GM12878 (cell line): ENCODE measurements at regions of chr10 and their contacts with region 1.

Region 1: GRCh38 chr10:15106352-15107013 is 9.3 kb downstream of the RPP38 start:
- DNase-seq: peak; percentile 26
- ATAC-seq: peak; percentile 99
- H3K4me3 ChIP-seq: no peak overlapping the region
- H3K27ac ChIP-seq: no peak overlapping the region
- H3K4me1 ChIP-seq: no peaks in the 10 kb centered on the region
- H3K27me3 ChIP-seq: no peaks in the 10 kb centered on the region
- CTCF ChIP-seq: peak; percentile 90 to 95 (median 93)
- EP300 ChIP-seq: no peak
- POLR2A ChIP-seq: no peak
- RAD21 ChIP-seq: peak; percentile 91

Region 2: DNA sequence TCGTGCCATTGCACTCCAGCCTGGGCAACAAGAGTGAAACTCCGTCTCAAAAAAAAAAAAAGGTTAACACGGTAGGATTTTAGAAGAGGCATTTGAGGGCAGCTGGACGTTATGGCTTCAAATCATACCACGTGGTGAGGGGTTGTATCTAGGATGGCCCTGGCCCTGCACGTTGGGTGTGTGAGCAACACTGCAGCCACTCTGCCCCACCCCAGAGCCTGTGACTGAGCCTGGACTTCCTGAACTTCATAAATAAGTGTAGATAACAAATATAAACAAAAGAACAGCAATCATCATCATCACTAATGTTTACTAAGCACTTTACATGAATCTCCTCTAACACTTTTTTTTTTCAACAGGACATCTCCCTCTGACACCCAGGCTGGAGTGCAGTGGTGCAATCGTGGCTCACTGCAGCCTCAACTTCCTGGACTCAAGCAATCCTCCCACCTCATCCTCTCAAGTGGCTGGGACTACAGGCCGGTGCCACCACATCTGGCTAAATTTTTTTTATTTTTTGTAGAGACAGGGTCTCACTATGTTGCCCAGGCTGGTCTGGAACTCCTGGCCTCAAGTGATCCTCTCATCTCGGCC is 606.2 kb before region 1 on chr10:
- CTCF ChIA-PET with region 1: no interaction called
- POLR2A ChIA-PET with region 1: no interaction called
- RAD21 ChIA-PET with region 1: no interaction called
- SMC1A ChIA-PET with region 1: no interaction called
- in situ Hi-C with region 1: no loop called
- intact Hi-C with region 1: loop called (anchors 5 kb)
- DNase-seq: no peak
- ATAC-seq: no peak
- H3K4me3 ChIP-seq: no peak overlapping the region
- H3K27ac ChIP-seq: no peak overlapping the region
- H3K4me1 ChIP-seq: no peaks in the 10 kb centered on the region
- H3K27me3 ChIP-seq: no peaks in the 10 kb centered on the region
- CTCF ChIP-seq: no peak
- EP300 ChIP-seq: no peak
- POLR2A ChIP-seq: no peak
- RAD21 ChIP-seq: no peak

Region 3: DNA sequence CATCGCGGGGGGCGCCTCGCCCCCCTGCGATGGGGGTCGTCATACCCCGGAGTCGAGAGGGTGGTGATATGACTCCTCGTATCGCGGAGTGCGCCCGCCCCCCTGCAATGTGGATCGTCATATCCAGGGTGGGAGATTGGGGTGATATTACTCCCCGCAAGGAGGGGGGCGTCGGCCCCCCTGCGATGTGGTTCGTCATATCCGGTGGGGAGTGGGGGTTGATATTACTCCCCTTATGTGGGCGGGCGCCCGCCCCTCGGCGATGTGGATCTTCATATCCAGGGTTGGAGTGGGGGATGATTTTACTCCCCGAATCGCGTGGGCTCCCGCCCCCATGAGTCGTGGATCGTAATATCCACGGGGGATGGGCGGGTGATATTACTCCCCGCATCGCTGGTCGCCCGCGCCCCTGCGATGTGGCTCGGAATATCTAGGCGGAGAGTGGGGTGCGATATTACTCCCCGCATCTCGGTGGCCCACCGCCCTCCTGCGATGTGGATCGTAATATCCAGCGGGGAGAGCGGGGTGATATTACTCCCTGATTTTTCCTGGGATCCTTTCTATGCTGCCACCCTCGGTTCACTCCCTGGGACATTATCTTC is 110.4 kb before region 1 on chr10:
- CTCF ChIA-PET with region 1: interaction called, 3 read pairs
- POLR2A ChIA-PET with region 1: no interaction called
- RAD21 ChIA-PET with region 1: interaction called, 3 read pairs
- SMC1A ChIA-PET with region 1: interaction called, 8 read pairs
- in situ Hi-C with region 1: no loop called
- intact Hi-C with region 1: loop called (anchors 1 kb)
- DNase-seq: no peak
- ATAC-seq: no peak
- H3K4me3 ChIP-seq: no peak overlapping the region
- H3K27ac ChIP-seq: no peak overlapping the region
- H3K4me1 ChIP-seq: no peaks in the 10 kb centered on the region
- H3K27me3 ChIP-seq: no peaks in the 10 kb centered on the region
- CTCF ChIP-seq: no peak
- EP300 ChIP-seq: no peak
- POLR2A ChIP-seq: no peak
- RAD21 ChIP-seq: no peak

Region 4: GRCh38 chr10:15227611-15228368 is 121.3 kb after region 1 on chr10:
- CTCF ChIA-PET with region 1: no interaction called
- POLR2A ChIA-PET with region 1: no interaction called
- RAD21 ChIA-PET with region 1: no interaction called
- SMC1A ChIA-PET with region 1: no interaction called
- in situ Hi-C with region 1: no loop called
- intact Hi-C with region 1: no loop called
- DNase-seq: no peak
- ATAC-seq: no peak
- H3K4me3 ChIP-seq: no peak overlapping the region
- H3K27ac ChIP-seq: no peak overlapping the region
- H3K4me1 ChIP-seq: no peaks in the 10 kb centered on the region
- H3K27me3 ChIP-seq: no peaks in the 10 kb centered on the region
- CTCF ChIP-seq: no peak
- EP300 ChIP-seq: no peak
- POLR2A ChIP-seq: no peak
- RAD21 ChIP-seq: no peak